ENCODE measurements at regions of chr15 and their contacts with region 1.

Region 1: GRCh38 chr15:33045066-33045810 is 149.3 kb downstream of the FMN1 start:
- DNase-seq: no peak
- H3K4me3 ChIP-seq: no peak overlapping the region
- H3K27ac ChIP-seq: no peak overlapping the region
- H3K4me1 ChIP-seq: no peaks in the 10 kb centered on the region
- H3K27me3 ChIP-seq: no peaks in the 10 kb centered on the region
- CTCF ChIP-seq: no peak

Region 2: GRCh38 chr15:31590609-31591008 is 1454.6 kb before region 1 on chr15:
- CTCF ChIA-PET with region 1: no interaction called
- POLR2A ChIA-PET with region 1: no interaction called
- intact Hi-C with region 1: no loop called
- DNase-seq: no peak
- H3K4me3 ChIP-seq: no peak overlapping the region
- H3K27ac ChIP-seq: no peak overlapping the region
- H3K4me1 ChIP-seq: no peaks in the 10 kb centered on the region
- H3K27me3 ChIP-seq: no peaks in the 10 kb centered on the region
- CTCF ChIP-seq: no peak

Region 3: DNA sequence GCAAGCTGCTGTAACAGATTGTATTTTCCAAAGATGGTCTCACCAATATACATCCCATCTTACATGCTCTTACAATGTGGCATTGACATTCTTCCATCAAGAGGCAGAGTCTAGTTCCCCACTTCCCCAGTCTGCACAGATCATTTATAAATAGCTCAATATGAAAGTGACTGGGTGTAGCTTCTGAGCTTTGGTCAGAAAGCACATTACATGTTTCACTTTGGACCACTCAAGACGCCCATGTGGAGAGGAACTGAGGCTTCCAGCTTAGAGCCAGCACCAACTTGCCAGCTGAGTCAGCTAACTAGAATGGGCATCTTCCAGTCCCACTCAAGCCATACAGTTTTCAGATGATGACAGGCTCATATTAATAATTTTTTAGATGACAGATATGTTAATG is 281.9 kb before region 1 on chr15:
- CTCF ChIA-PET with region 1: no interaction called
- POLR2A ChIA-PET with region 1: interaction called, 13 read pairs
- intact Hi-C with region 1: no loop called
- DNase-seq: no peak
- H3K4me3 ChIP-seq: no peak overlapping the region
- H3K27ac ChIP-seq: no peak overlapping the region
- H3K4me1 ChIP-seq: no peaks in the 10 kb centered on the region
- H3K27me3 ChIP-seq: no peaks in the 10 kb centered on the region
- CTCF ChIP-seq: no peak

Region 4: DNA sequence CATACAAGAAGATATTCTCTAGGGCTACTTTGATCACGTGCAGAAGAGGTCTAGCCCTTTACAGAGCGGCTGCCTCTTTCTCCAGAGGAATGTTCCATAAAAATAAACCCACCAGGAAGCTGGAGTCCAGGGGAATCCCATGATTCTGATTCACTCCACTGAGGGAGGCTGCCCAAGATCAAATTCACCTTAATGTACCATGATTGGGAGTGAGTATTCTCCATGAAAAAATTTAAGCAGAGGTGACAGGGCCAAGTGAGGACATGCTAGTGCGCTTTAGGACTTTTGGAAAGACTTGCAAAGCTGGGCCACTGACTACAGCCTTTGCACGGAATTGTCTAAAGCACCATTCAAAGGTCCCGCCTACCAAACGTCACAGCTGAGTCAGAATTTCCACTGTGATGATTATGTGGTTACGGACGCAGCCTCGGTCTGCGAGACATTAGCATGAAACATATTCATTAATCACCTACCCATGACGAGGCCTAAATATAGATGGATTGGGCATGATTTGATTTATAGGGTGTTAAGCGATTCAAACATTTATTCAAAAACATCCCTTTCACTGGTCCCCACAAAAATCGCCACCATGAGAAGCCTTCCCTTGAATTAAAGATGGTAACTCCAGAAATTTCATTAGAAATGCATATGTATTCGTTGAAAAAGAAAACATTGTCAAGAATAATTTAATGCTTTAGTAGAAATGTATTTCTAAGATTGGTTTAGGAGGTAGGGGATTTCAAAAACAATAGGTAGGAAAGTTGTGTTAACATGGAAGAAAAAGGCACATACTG is 174.8 kb before region 1 on chr15:
- CTCF ChIA-PET with region 1: no interaction called
- POLR2A ChIA-PET with region 1: no interaction called
- intact Hi-C with region 1: no loop called
- DNase-seq: no peak
- H3K4me3 ChIP-seq: no peak overlapping the region
- H3K27ac ChIP-seq: no peak overlapping the region
- H3K4me1 ChIP-seq: peaks cover 11% of the 10 kb centered on the region
- H3K27me3 ChIP-seq: no peaks in the 10 kb centered on the region
- CTCF ChIP-seq: no peak

Region 5: DNA sequence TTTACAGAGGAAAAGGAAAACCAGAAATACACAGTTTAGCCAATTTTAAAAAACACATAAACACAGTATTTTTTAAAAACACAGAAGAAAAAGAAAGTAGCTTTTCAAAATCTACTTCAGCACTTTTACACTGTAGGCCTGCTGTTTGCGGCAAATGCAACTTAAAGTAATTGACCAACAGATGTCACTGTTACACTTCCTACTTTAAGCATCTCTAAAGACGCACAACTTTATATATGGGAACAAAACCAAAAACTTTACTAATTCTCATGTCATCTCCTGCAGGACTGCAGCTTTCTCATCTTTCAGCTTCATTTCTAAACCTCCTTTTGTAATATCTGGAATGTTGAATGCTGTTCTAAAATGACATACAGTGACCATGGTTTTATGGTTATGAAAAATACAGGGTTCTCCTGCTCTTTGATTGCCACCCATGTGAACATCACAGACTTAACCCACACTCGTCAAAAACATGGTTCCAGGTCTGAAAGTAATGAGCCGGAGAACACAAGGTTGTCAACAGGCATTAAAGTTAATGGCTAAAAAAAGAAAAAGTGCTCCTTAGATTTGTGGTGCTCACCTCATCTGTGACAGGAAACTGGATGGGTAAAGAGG is 41.4 kb after region 1 on chr15:
- CTCF ChIA-PET with region 1: no interaction called
- POLR2A ChIA-PET with region 1: no interaction called
- intact Hi-C with region 1: no loop called
- DNase-seq: peak in 1 of 2 experiments; percentile 51
- H3K4me3 ChIP-seq: no peak overlapping the region
- H3K27ac ChIP-seq: no peak overlapping the region
- H3K4me1 ChIP-seq: peaks cover 42% of the 10 kb centered on the region
- H3K27me3 ChIP-seq: no peaks in the 10 kb centered on the region
- CTCF ChIP-seq: peak; percentile 64